ENCODE measurements at regions of chr15 and their contacts with region 1.

Region 1: DNA sequence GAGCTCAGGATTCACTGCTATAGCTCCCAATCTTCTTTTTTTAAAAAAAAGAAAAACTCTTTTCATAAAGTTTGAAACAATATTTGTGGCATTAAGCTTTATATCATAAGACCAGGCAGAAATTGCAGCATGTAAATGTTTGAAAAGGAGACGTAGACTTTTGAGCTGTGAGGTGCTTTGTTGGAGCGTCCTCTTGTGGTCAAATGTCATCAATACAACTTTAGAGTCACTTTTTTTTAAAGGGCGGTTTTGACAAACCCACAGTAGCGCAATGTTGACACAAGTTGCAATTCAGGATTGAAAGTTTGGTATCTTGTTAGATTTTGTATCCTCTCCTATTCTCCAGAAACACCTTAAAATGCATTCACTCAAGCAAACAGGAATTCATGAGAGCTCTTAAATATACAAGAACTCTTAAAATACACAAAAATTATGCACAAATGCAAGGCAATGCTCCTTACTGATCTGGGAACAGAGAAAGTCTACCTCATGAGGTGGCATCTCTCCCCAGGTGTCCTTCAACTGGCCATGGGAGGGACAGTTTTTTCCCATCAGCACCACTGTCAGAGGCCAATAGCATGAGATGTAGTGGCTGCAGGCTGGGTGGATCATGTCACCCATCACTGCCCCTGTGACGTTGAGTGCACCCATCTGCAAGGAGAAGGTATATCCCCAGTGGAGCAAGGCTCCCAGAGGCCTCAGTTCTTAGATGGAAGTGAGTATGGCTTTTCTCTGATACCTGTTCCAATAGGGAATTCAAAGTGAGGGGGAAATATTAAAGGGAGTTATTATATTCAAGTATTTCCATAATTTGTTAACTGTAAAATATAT is 70.7 kb downstream of the ANXA2 start:
- DNase-seq: no peak
- H3K4me3 ChIP-seq: no peak overlapping the region
- H3K27me3 ChIP-seq: peaks cover 25% of the 10 kb centered on the region
- CTCF ChIP-seq: peak; percentile 82

Region 2: DNA sequence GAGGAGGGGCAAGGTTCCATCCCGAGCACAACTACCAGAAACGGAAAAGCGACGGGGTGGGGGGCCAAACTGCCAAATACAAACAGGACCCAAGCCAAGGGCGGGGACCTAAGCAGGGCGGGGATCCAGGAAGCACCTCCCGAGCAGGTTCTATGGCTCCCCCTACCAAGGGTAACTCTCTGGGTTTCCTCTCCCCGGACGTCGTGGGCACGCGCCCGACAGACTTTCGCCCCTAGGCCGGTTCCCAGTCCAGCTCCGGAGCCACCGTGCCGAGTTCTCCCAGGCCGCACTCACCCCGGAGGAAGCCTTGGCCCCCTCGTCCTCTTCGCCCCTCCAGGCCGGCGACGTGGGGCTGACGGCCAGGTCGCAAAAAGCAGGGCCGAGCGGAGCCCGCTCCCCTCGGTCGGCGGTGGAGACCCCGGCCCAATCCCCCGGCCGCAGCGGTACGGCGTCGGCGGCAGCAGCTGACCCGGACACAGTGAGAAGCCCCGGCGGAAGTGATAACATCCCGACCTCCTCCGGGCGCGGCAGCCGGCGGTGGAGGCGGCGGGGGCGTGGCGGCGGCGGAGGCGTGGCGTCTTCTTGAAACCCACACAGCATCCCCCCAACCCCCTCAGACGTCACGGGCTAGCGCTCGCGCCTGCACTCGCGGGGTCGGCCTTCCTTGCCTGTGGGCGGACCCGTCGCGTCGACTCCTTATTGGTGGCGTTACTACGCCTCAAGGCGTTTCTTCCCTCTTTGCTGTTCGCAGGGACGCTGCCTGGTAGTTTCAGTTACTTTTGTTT is 638.0 kb before region 1 on chr15 and contains the start of gene BNIP2:
- CTCF ChIA-PET with region 1: interaction called, 51 read pairs
- POLR2A ChIA-PET with region 1: no interaction called
- DNase-seq: peak; percentile 91
- H3K4me3 ChIP-seq: peak within 1 kb of the TSS; percentile 100
- H3K27me3 ChIP-seq: no peaks in the 10 kb centered on the region
- CTCF ChIP-seq: no peak; the same call in 1 of the 2 replicates
- polyA plus RNA-seq, gene BNIP2: 25.3 and 38.9 TPM in 2 replicates

Region 3: DNA sequence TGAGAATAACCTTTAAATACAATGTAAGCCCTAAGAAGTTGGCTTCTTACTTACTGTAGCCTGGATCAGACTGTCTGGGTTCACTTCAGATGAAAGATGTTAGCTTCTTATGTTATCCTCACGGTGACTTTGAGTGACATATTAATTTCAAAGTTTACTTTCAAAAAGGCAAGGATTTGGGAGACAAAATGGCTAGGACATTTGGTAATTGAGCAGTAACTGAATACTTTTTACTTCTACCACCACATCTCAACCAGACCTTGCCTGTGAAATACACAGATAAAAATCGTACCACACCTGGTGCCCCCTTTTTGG is 601.9 kb before region 1 on chr15:
- CTCF ChIA-PET with region 1: interaction called, 60 read pairs
- POLR2A ChIA-PET with region 1: no interaction called
- DNase-seq: no peak
- H3K4me3 ChIP-seq: no peak overlapping the region
- H3K27me3 ChIP-seq: peaks cover 5% of the 10 kb centered on the region
- CTCF ChIP-seq: no peak

Region 4: DNA sequence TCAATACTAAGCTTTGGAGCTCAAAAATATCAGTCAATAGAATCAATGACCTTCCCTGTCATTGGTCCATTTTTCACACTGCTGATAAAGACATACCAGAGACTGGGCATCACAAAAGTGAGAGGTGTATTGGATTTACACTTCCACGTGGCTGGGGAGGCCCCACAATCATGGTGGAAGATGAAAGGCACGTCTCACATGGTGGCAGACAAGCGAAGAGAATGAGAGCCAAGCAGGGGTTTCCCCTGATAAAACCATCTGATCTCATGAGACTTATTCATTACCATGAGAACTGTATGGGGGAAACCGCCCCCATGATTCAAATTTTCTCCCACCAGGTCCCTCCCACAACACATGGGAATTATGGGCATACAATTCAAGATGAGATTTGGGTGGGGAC is 11.2 kb before region 1 on chr15:
- CTCF ChIA-PET with region 1: interaction called, 11 read pairs
- POLR2A ChIA-PET with region 1: no interaction called
- DNase-seq: no peak
- H3K4me3 ChIP-seq: no peak overlapping the region
- H3K27me3 ChIP-seq: peaks cover 5% of the 10 kb centered on the region
- CTCF ChIP-seq: no peak

Region 5: DNA sequence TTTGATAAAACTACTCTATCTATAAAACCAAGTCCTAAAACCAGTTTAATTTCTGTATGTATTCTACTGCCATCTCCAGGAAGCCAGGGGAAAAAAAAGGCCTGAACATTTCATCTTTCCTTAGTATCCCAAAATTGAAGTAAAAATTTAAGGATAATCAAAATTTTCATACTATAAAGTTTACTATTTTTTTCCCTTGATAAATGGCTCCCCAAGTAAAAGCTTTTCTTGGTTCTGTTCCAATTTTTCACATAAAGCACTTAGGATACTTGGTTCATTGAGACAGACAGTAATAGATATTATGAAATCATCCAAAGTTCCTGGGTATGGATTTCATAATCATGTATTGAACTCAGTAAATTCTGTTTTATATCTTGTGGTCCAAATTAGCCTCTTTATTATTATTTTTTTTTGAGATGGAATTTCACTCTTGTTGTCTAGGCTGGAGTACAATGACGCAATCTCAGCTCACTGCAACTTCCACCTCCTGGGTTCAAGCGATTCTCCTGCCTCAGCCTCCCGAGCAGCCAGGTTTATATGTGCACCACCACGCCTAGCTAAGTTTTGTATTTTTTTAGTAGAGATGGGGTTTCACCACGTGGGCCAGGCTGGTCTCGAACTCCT is 117.4 kb after region 1 on chr15:
- CTCF ChIA-PET with region 1: interaction called, 42 read pairs
- POLR2A ChIA-PET with region 1: no interaction called
- DNase-seq: no peak
- H3K4me3 ChIP-seq: no peak overlapping the region
- H3K27me3 ChIP-seq: no peaks in the 10 kb centered on the region
- CTCF ChIP-seq: peak; percentile 68

Region 6: DNA sequence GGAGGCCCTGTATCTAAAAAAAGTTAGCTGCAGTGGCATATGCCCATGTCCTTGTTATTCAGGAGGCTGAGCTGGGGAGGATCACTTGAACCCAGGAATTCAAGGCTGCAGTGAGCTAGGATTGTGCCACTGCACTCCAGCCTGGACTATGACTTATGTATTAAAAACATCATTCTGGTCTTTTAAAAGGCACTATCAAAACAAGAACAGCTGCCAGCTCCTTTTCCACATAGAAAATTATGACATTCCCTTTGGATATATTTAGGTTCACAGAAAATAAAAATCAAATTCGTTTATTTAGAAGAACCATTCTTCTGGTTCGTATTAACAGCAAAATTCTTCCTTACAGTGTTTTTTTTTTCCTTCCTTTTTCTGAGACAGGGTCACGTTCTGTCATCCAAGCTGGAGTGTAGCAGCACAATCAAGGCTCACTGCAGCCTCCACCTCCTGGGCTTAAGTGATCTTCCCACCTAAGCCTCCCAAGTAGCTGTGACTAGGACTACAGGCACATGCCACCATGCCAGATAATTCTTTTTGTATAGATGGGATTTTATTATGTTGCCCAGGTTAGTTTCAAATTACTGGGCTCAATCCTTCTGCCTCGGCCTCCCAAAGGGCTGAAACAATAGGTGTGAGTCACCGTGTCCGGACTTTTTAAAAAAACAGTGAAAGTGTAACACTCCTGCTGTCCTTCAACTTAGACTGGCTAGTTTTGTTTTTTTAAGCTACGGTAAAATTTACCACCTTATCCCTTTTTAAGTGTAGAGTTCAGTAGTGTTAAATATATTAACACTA is 138.0 kb after region 1 on chr15:
- CTCF ChIA-PET with region 1: no interaction called
- POLR2A ChIA-PET with region 1: no interaction called
- DNase-seq: no peak
- H3K4me3 ChIP-seq: no peak overlapping the region
- H3K27me3 ChIP-seq: no peaks in the 10 kb centered on the region
- CTCF ChIP-seq: no peak

Measured in BJ (cell line).